ENCODE measurements at regions of chr17 and their contacts with region 1.

Region 1: GRCh38 chr17:34434052-34434451 is 71.0 kb upstream of the CCL1 start:
- DNase-seq: no peak
- ATAC-seq: peak; percentile 78
- H3K4me3 ChIP-seq: no peak overlapping the region
- H3K4me3 Mint-ChIP-seq: no peak overlapping the region
- H3K27ac ChIP-seq: no peak overlapping the region
- H3K27ac Mint-ChIP-seq: no peak overlapping the region
- H3K4me1 ChIP-seq: no peaks in the 10 kb centered on the region
- H3K4me1 Mint-ChIP-seq: peaks cover 0 to 2% (median 0%) of the 10 kb centered on the region in 7 donors
- H3K27me3 ChIP-seq: no peaks in the 10 kb centered on the region
- H3K27me3 Mint-ChIP-seq: peaks cover 0 to 10% (median 9%) of the 10 kb centered on the region in 5 donors

Region 2: GRCh38 chr17:34133350-34133749 is 300.7 kb before region 1 on chr17:
- CTCF ChIA-PET with region 1: no interaction called
- POLR2A ChIA-PET with region 1: no interaction called
- intact Hi-C with region 1: no loop called
- DNase-seq: no peak
- ATAC-seq: no peak
- H3K4me3 ChIP-seq: no peak overlapping the region
- H3K4me3 Mint-ChIP-seq: no peak overlapping the region
- H3K27ac ChIP-seq: no peak overlapping the region
- H3K27ac Mint-ChIP-seq: no peak overlapping the region
- H3K4me1 ChIP-seq: no peaks in the 10 kb centered on the region
- H3K4me1 Mint-ChIP-seq: no peaks in the 10 kb centered on the region
- H3K27me3 ChIP-seq: no peaks in the 10 kb centered on the region
- H3K27me3 Mint-ChIP-seq: peaks cover 0 to 15% (median 9%) of the 10 kb centered on the region in 5 donors

Region 3: GRCh38 chr17:34519282-34519681 is 85.2 kb after region 1 on chr17:
- CTCF ChIA-PET with region 1: no interaction called
- POLR2A ChIA-PET with region 1: no interaction called
- intact Hi-C with region 1: loop called in 1 of 2 experiments (anchors 10 kb)
- DNase-seq: no peak
- ATAC-seq: no peak
- H3K4me3 ChIP-seq: no peak overlapping the region
- H3K4me3 Mint-ChIP-seq: no peak overlapping the region
- H3K27ac ChIP-seq: no peak overlapping the region
- H3K27ac Mint-ChIP-seq: no peak overlapping the region
- H3K4me1 ChIP-seq: no peaks in the 10 kb centered on the region
- H3K4me1 Mint-ChIP-seq: no peaks in the 10 kb centered on the region
- H3K27me3 ChIP-seq: no peaks in the 10 kb centered on the region
- H3K27me3 Mint-ChIP-seq: peaks cover 7 to 18% (median 15%) of the 10 kb centered on the region in 5 donors